Activated CD8-positive, alpha-beta T cell treated with anti-CD3 and anti-CD28 coated beads, Interleukin-2, amount 10 ng/mL, durations not matched to agents 7 days and 5 days (primary cell): ENCODE measurements at regions of chr6 and their contacts with region 1.

Region 1: GRCh38 chr6:157873735-157874344 is 50.8 kb downstream of the SNX9 start:
- DNase-seq: peak; percentile 91
- ATAC-seq: peak; percentile 89
- H3K4me3 Mint-ChIP-seq: no peak overlapping the region
- H3K27ac Mint-ChIP-seq: no peak overlapping the region
- H3K4me1 Mint-ChIP-seq: peaks cover 15% of the 10 kb centered on the region
- H3K27me3 Mint-ChIP-seq: no peaks in the 10 kb centered on the region

Region 2: DNA sequence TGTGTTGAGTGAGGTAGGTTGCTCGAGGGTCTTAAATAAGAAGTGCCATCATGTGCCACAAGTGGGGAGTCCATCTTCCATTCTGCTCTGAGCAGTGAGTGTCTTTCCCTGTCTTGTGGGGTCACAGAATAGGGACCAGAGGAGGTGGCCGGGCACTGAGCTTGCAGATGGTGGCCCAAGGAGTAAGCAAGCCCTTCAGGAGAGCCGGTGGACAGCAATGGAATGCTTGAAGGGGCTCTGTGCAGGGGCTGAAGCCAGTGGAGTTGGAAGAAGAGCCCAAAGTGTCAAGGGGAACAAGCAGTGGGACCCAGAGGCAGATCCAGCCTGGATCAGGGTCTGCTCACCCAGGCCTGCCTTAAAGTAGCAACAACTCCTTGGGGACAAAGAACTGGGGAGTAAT is 264.3 kb before region 1 on chr6:
- CTCF ChIA-PET with region 1: no interaction called
- POLR2A ChIA-PET with region 1: no interaction called
- DNase-seq: no peak
- ATAC-seq: no peak
- H3K4me3 Mint-ChIP-seq: no peak overlapping the region
- H3K27ac Mint-ChIP-seq: no peak overlapping the region
- H3K4me1 Mint-ChIP-seq: peaks cover 11% of the 10 kb centered on the region
- H3K27me3 Mint-ChIP-seq: peaks cover 3% of the 10 kb centered on the region

Region 3: DNA sequence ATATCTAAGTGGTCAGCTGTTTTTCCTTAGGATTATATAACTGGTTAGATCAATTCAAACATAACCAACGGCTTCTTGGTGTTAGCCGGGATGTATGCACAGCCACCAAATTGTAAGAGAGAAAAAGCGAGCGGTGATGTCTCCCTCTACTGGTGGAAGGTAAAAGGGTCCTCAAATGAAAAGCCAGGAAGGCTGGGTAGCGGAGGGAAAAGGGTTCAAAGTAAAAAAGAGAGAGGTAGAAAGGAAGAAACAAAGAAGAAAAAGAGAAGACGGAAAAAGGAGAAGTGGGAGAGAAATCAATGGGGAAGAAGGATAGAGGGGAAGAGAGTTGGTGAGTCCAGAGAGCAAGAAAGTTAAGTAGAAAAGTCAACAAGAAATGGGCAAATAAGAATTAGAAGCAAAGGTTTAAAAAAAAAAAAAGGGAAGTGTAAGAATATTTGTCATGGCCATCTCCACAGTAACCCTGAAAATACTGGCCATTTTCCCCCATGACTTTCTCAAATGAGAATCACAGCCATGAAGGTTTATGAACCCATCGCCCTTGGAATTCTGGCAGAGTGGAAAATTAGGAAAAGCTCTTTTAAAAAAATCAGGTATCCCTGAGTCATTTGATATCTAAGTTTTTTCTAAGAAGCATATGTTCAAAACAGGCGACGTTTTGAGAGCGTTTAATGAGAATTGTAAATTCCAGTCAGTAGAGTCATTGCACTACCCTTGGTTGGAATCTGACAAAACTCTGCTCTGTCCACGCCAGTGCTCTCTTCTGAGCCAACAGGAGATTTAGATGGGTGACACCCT is 206.4 kb before region 1 on chr6:
- CTCF ChIA-PET with region 1: interaction called, 17 read pairs
- POLR2A ChIA-PET with region 1: no interaction called
- DNase-seq: peak; percentile 74
- ATAC-seq: peak; percentile 81
- H3K4me3 Mint-ChIP-seq: no peak overlapping the region
- H3K27ac Mint-ChIP-seq: no peak overlapping the region
- H3K4me1 Mint-ChIP-seq: peaks cover 22% of the 10 kb centered on the region
- H3K27me3 Mint-ChIP-seq: peaks cover 6% of the 10 kb centered on the region

Region 4: GRCh38 chr6:157800420-157801237 is 73.2 kb before region 1 on chr6:
- CTCF ChIA-PET with region 1: interaction called, 10 read pairs
- POLR2A ChIA-PET with region 1: no interaction called
- DNase-seq: peak; percentile 46
- ATAC-seq: peak; percentile 92
- H3K4me3 Mint-ChIP-seq: no peak overlapping the region
- H3K27ac Mint-ChIP-seq: no peak overlapping the region
- H3K4me1 Mint-ChIP-seq: peaks cover 9% of the 10 kb centered on the region
- H3K27me3 Mint-ChIP-seq: peaks cover 13% of the 10 kb centered on the region

Region 5: GRCh38 chr6:157830354-157831017 is 43.4 kb before region 1 on chr6:
- CTCF ChIA-PET with region 1: interaction called, 16 read pairs
- POLR2A ChIA-PET with region 1: no interaction called
- DNase-seq: no peak
- ATAC-seq: peak; percentile 45
- H3K4me3 Mint-ChIP-seq: no peak overlapping the region
- H3K27ac Mint-ChIP-seq: no peak overlapping the region
- H3K4me1 Mint-ChIP-seq: peaks cover 50% of the 10 kb centered on the region
- H3K27me3 Mint-ChIP-seq: peaks cover 3% of the 10 kb centered on the region

Region 6: GRCh38 chr6:157853902-157854502 is 19.8 kb before region 1 on chr6:
- CTCF ChIA-PET with region 1: no interaction called
- POLR2A ChIA-PET with region 1: no interaction called
- DNase-seq: peak; percentile 5
- ATAC-seq: no peak
- H3K4me3 Mint-ChIP-seq: no peak overlapping the region
- H3K27ac Mint-ChIP-seq: no peak overlapping the region
- H3K4me1 Mint-ChIP-seq: peaks cover 21% of the 10 kb centered on the region
- H3K27me3 Mint-ChIP-seq: peaks cover 5% of the 10 kb centered on the region

Region 7: DNA sequence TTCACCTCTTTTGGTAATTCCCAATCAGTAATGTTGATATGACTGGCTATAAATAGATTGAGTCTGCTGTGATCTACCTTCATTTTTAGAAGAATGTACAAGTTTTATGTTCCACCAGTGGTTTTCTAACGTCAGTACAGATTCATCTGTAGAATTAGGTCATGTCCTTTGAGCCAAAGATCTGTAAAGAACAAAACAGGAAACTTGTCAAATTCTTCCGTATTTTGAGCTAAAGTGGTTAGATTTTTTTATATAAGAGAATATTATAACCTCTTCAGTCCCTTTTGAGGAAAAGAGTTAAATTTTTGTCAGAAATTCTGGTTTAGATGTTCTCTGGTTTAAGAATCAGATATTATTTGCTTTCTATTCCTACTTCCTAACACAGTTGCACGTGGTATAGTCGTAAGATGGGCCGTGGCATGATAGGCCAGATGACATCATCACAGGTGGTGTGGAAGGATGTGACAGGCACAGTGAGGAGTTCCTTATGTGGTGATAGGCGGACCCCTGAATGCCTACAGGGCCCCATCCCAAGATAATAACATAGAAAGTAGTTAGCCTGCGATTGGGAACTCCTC is 11.5 kb after region 1 on chr6:
- CTCF ChIA-PET with region 1: interaction called, 25 read pairs
- POLR2A ChIA-PET with region 1: no interaction called
- DNase-seq: peak; percentile 76
- ATAC-seq: peak; percentile 86
- H3K4me3 Mint-ChIP-seq: no peak overlapping the region
- H3K27ac Mint-ChIP-seq: peak overlapping the region; percentile 58
- H3K4me1 Mint-ChIP-seq: peaks cover 33% of the 10 kb centered on the region
- H3K27me3 Mint-ChIP-seq: no peaks in the 10 kb centered on the region